ENCODE measurements at regions of chr14 and their contacts with region 1.

Region 1: GRCh38 chr14:60724137-60724619 is at the start of gene SIX4:
- DNase-seq: peak; percentile 60
- CTCF ChIP-seq: no peak

Region 2: DNA sequence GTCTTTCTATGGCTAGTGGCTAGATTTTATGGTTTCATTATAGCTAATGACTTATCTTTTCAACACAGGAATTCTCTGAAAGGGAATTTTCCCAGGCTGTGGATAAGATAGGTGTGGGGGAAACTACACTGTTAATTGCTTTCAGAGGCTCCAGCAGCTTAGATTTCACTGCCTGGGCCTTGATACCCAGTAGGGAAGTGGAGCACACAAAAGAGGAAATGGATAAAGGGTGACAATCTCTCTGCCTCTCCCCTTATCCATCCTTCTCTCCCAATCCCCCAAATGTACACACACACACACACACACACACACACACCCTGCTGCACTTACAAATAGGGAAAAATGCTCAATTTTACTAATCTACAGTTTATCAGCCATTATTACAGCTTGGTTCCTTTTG is 19.1 kb before region 1 on chr14:
- CTCF ChIA-PET with region 1: no interaction called
- POLR2A ChIA-PET with region 1: no interaction called
- DNase-seq: no peak
- CTCF ChIP-seq: no peak

Region 3: DNA sequence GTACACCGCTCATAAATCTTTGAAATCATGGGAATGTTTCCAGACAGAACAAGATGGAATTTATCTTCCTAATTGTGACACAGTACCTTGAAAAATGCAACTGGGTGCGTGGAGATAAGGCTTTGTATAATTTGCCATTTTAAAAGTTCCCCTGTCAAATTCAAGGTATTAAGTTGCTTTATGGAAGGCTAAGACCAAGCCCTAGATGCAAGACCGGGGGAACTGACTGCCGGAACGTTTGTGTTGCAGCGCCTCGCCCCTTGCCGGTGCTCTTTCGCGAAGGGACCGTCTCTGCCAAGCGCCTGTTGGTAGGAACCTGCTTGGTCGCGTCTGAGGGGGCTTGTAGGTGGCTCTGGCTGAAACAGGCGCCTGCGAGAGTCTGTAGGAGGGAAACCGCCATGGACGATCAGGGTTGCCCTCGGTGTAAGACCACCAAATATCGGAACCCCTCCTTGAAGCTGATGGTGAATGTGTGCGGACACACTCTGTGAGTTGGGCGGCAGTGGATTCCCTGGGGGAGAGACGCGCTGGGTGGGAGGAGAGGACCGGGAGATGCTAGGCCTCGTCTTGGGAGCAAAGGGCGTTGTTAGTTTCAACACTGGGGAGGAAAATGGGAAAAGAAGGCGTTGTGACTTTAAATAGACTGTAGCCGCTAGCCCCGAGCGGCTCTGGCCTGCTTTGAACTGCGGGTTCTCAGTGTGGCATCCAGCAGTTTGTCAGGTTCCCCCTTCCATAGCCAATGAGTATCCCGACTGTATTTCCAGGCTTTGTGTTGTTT is 10.5 kb after region 1 on chr14 and contains the start of gene MNAT1:
- CTCF ChIA-PET with region 1: interaction called, 15 read pairs
- POLR2A ChIA-PET with region 1: no interaction called
- DNase-seq: peak; percentile 73
- CTCF ChIP-seq: no peak